ENCODE measurements at regions of chr15 and their contacts with region 1.

Region 1: DNA sequence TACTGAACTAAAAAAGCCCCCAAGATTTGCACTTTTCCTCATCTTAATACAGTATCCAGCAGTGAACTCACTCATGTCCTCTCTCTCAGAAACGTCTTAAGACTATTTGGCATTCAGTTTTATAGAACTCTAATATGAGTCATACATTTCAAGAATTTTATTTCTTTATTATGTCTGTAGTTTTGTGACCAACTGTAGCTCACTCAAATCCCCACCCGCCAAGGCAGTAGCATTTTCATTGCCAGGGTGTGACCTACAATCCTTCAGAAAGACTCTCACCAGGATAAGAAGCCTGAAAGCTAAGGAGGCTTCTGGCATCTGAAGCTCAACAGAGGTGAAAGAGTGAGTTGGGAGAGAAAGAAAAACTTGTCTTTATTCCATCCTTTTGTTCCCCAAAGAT is 537.1 kb downstream of the RSL24D1 start:
- DNase-seq: no peak
- H3K4me3 ChIP-seq: no peak overlapping the region
- H3K27ac ChIP-seq: no peak overlapping the region
- H3K4me1 ChIP-seq: no peaks in the 10 kb centered on the region
- H3K27me3 ChIP-seq: no peaks in the 10 kb centered on the region
- CTCF ChIP-seq: no peak

Region 2: DNA sequence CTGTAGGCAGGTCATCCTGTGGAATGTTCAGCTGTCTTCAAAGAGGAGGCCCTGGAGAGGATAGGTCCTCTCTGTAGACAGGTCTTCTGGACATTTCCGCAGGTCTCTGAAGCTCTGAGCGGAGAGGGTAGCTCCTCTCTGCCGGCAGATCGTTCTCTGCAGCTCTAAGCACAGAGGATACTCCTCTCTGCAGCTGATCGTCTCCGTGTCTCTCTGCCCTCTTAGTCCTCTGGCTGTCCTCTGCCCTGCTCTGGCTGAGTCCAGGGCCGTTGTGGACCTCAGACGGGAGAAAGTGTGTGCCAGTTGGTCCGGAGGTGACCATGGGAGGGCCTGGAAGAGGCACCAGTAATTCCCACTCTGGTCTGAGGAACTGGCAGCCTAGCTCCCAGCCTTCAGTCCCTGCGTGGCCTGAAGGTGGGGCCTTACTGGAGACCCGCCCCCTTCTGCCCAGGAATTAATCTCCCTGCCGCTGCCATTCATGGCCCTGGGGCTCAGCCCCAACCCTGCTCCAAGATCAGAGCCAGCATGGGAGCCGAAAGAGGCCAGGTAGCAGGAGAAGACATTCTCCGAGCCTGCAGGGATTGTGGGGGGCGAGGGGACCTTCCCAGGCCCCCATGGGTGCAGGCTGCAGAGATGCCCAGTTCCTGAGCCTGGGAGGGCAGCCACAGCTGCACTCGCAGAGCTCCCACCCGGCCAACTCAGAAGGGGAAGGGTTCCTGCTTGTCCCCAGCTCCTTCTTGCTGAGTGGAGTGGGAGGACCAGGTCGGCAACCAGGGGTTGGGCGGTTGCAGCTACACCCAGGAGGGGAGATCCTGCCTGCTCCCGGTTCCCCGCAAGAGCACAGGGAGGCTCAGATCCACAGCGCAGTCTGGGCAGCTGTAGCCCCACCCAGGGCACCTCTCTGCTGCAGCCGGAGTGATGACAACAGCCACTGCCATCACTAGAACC is 48.4 kb after region 1 on chr15:
- intact Hi-C with region 1: loop called (anchors 5 kb)
- DNase-seq: peak in 1 of 5 donors; percentile 48
- H3K4me3 ChIP-seq: no peak overlapping the region
- H3K27ac ChIP-seq: no peak overlapping the region
- H3K4me1 ChIP-seq: no peaks in the 10 kb centered on the region
- H3K27me3 ChIP-seq: no peaks in the 10 kb centered on the region
- CTCF ChIP-seq: no peak

Region 3: GRCh38 chr15:54772663-54773062 is 113.0 kb after region 1 on chr15:
- intact Hi-C with region 1: no loop called
- DNase-seq: no peak
- H3K4me3 ChIP-seq: no peak overlapping the region
- H3K27ac ChIP-seq: no peak overlapping the region
- H3K4me1 ChIP-seq: no peaks in the 10 kb centered on the region
- H3K27me3 ChIP-seq: no peaks in the 10 kb centered on the region
- CTCF ChIP-seq: no peak